ENCODE measurements at regions of chr11 and their contacts with region 1.

Region 1: GRCh38 chr11:10857709-10858438 is at the start of gene ZBED5:
- DNase-seq: peak; percentile 99
- ATAC-seq: peak; percentile 98
- total RNA-seq, gene ZBED5: 42.7 TPM

Region 2: DNA sequence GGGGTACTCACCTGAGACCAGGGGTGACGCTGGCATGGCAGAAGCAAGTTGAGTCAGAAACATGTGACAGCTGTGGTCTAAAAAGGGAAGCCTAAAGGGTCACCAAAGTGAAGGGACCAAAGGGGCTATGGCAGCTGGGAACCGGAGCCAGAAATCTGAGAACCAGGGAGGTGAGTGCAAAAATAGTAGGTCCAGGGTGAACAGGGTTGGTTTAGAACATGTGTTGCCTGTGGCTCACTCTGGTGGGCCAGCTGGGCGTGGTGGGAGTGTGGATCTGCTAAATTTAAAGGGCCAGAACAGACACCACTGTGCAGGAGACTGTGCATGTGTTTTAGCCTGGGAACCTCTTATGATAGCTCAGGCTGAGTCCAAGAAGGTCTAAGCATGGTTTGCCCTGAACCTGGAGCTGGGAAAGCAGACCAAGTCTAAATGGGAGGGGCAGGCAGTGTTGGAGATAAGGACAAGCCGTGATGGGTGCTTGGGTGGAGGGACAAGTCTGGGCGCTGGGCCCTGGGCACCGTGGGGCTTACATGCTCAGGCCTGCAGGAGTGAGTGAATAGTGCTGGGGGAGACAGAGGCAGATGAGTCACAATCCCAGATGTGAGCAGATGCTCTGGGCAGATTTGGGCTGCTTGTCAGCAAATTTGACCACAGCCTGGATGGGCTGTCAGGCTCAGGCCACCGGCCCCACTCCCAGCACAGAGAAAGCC is 41.4 kb after region 1 on chr11:
- intact Hi-C with region 1: loop called (anchors 2 kb)
- DNase-seq: peak; percentile 75
- ATAC-seq: peak; percentile 70

Region 3: GRCh38 chr11:10920205-10920604 is 62.3 kb after region 1 on chr11:
- intact Hi-C with region 1: no loop called
- DNase-seq: no peak
- ATAC-seq: no peak